ENCODE measurements at regions of chr2 and their contacts with region 1.

Region 1: DNA sequence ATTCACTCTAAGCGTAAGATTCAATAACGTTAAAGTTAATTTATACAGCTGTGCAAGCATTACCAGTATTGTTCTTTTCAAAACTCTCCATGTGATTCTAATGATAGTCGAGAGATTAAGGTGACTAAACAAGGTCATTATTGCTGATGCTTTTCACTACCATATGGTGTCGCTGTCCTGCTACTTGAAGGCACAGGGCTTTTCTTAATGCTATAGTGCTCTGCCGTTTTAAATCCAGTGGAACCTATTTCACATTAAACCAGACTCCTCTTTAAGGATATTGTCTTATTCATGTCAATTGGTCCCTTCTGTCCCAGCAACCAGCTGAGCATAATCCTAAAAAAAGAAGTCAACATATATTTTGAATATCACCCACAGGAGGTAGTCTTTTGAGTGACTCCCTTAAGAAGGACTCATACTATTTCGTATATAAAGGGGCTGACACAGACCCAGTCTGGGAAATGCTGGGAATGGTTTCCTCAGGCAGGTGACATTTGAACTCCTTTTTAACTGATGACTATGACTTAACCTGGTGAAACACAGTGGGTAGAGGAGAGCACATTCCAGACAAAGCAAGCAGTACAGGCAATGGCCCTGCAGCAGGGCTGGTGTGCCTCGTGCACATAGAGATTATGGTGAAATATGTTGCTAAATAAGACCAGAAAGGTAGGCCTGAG is 53.9 kb upstream of the CYTIP start:
- DNase-seq: peak; percentile 61
- H3K4me3 ChIP-seq: no peak overlapping the region
- H3K27ac ChIP-seq: no peak overlapping the region
- H3K4me1 ChIP-seq: no peaks in the 10 kb centered on the region
- H3K27me3 ChIP-seq: no peaks in the 10 kb centered on the region
- CTCF ChIP-seq: peak; percentile 86

Region 2: DNA sequence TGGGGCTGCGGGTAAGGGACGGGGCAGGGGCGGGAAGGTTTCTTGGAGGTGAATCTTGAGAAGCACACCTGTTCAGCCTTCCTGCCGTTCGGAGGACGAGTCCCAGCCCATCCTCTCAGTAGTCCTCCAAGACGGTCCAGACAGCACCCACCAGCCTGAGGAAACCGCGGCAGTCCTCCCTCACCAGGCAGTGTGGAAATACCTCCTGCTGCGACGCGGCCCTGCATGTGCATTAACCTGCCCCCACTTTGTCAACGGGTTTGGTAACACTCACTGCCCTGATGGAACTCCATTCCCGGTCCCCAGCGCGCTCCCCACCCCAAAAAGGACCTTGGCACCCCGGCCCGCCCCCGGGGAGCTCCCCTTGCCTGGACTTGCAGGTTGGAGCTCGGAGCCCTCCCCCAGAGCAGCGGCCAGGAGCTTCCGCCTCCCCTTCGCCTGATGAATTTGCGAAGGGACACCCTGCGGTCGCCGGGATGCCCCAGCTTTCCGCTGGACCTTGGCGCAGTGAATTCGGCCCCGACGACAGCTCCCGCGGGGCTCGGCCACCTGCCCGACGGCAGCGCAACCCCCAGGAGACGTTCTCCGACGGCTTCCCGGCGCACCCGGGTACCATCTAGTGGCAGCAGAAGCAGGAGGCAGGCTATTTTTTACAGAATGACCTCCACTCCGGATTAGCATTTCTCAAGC is 99.4 kb after region 1 on chr2:
- CTCF ChIA-PET with region 1: interaction called, 4 read pairs
- POLR2A ChIA-PET with region 1: no interaction called
- intact Hi-C with region 1: loop called (anchors 1 kb)
- DNase-seq: peak; percentile 33
- H3K4me3 ChIP-seq: no peak overlapping the region
- H3K27ac ChIP-seq: no peak overlapping the region
- H3K4me1 ChIP-seq: no peaks in the 10 kb centered on the region
- H3K27me3 ChIP-seq: peaks cover 43% of the 10 kb centered on the region
- CTCF ChIP-seq: peak; percentile 59

Region 3: GRCh38 chr2:157984866-157985265 is 487.1 kb after region 1 on chr2:
- CTCF ChIA-PET with region 1: no interaction called
- POLR2A ChIA-PET with region 1: no interaction called
- intact Hi-C with region 1: no loop called
- DNase-seq: no peak
- H3K4me3 ChIP-seq: no peak overlapping the region
- H3K27ac ChIP-seq: no peak overlapping the region
- H3K4me1 ChIP-seq: peaks cover 4% of the 10 kb centered on the region
- H3K27me3 ChIP-seq: no peaks in the 10 kb centered on the region
- CTCF ChIP-seq: no peak

Measured in A673 (cell line).